ENCODE measurements at regions of chr15 and their contacts with region 1.

Region 1: GRCh38 chr15:101127506-101128076 is 124.3 kb downstream of the CHSY1 start:
- DNase-seq: peak in 6 of 9 donors; percentile 17 to 43 (median 24)
- ATAC-seq: peak; percentile 56
- H3K4me3 ChIP-seq: peak overlapping the region; percentile 5
- H3K4me3 Mint-ChIP-seq: peak overlapping the region; percentile 8 to 84 (median 66)
- H3K27ac ChIP-seq: peak overlapping the region; percentile 43
- H3K27ac Mint-ChIP-seq: peak overlapping the region; percentile 77 to 98 (median 92)
- H3K4me1 ChIP-seq: peaks cover 24 to 25% of the 10 kb centered on the region in 2 donors
- H3K4me1 Mint-ChIP-seq: peaks cover 30 to 68% (median 38%) of the 10 kb centered on the region in 7 donors
- H3K27me3 ChIP-seq: no peaks in the 10 kb centered on the region
- H3K27me3 Mint-ChIP-seq: peaks cover 0 to 6% (median 0%) of the 10 kb centered on the region in 5 donors

Region 2: DNA sequence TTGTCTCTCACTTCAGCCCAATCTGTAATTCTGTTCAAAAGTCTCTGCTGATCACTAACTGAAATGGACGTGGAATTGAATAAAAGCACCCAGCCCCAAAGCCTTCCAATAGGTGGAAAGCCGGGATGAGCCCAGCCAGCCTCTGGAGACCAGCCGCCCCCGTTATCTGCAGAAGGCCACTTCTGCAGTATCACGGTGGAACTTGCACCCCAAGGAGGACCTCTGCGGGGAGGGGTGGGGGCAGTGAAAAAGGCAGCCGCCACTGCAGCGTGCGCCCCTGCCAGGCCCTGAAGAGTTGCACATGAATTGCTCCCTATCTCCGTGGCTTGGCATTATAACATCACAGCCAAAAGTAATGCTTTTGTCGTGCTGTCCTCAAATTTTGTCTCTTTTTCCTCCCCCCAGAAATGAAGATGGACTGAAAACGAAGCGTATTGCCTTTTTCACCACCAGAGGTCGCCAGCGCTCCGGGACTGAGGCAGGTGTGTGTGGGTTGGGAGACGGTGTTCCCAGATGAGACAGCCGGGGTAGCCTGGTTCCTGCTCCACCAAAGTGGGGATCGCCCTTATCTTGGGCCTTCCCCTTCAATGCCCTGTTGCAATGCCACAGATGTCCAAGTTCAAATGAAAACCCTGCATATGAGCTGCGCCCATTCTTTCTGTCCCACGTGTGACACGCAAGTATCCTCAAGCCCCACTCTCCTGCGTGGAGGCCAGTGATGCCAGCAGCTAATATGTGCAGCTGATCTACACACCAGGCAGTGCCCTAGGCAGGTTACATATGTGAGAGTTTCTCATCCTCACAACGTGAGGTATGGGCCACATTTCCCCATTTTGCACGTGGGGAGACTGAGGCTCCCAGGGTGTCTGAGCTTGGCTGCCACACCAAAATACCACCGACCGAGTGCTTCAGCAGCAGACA is 112.4 kb before region 1 on chr15:
- CTCF ChIA-PET with region 1: no interaction called
- POLR2A ChIA-PET with region 1: no interaction called
- intact Hi-C with region 1: no loop called
- DNase-seq: peak; percentile 19 to 77 (median 48)
- ATAC-seq: peak; percentile 53
- H3K4me3 ChIP-seq: no peak overlapping the region
- H3K4me3 Mint-ChIP-seq: no peak overlapping the region
- H3K27ac ChIP-seq: no peak overlapping the region
- H3K27ac Mint-ChIP-seq: no peak overlapping the region
- H3K4me1 ChIP-seq: no peaks in the 10 kb centered on the region
- H3K4me1 Mint-ChIP-seq: peaks cover 0 to 3% (median 0%) of the 10 kb centered on the region in 7 donors
- H3K27me3 ChIP-seq: no peaks in the 10 kb centered on the region
- H3K27me3 Mint-ChIP-seq: peaks cover 0 to 3% (median 0%) of the 10 kb centered on the region in 5 donors

Region 3: DNA sequence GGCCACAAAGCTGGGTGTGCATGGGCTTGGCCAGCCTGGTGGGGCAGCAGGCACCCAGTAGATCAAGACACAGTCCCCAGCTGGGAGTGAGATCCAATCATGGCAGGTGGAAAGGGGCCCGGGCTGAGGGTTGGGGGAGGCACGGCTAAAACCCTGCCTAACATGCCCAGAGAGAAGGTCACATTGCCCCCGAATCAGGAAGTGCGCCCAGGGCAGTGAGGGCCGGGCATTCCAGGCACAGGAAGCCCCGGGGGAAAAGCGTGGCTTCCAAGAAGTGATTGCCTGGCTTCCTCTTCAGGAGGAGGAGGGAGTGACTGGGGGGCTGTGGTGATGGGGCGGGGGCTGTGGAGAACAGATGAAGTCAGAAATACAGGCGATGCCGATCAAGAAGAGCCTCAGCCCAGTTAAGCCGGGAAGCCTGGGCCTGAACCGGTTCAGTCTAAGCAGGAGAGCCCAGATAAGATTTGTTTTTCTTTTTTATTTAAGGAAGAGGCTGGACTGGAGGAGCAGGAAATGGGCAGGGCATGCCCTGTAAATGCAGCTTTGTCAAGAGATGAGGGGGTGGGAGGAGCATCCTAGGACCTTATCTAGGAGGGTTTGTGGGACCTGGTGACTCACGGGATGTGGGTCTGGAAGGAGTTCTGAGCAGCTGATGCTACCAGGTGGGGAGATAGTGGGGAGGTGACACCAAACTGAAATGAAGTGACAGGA is 40.3 kb after region 1 on chr15:
- CTCF ChIA-PET with region 1: no interaction called
- POLR2A ChIA-PET with region 1: no interaction called
- intact Hi-C with region 1: loop called in 1 of 2 experiments (anchors 5 kb)
- DNase-seq: peak in 4 of 9 donors; percentile 4 to 70 (median 12)
- ATAC-seq: peak; percentile 81
- H3K4me3 ChIP-seq: no peak overlapping the region
- H3K4me3 Mint-ChIP-seq: peak overlapping the region; percentile 34 to 78 (median 53)
- H3K27ac ChIP-seq: no peak overlapping the region
- H3K27ac Mint-ChIP-seq: peak overlapping the region in 8 of 9 donors; percentile 5 to 96 (median 49)
- H3K4me1 ChIP-seq: peaks cover 0 to 14% of the 10 kb centered on the region in 2 donors
- H3K4me1 Mint-ChIP-seq: peaks cover 12 to 50% (median 20%) of the 10 kb centered on the region in 7 donors
- H3K27me3 ChIP-seq: no peaks in the 10 kb centered on the region
- H3K27me3 Mint-ChIP-seq: no peaks in the 10 kb centered on the region

Region 4: DNA sequence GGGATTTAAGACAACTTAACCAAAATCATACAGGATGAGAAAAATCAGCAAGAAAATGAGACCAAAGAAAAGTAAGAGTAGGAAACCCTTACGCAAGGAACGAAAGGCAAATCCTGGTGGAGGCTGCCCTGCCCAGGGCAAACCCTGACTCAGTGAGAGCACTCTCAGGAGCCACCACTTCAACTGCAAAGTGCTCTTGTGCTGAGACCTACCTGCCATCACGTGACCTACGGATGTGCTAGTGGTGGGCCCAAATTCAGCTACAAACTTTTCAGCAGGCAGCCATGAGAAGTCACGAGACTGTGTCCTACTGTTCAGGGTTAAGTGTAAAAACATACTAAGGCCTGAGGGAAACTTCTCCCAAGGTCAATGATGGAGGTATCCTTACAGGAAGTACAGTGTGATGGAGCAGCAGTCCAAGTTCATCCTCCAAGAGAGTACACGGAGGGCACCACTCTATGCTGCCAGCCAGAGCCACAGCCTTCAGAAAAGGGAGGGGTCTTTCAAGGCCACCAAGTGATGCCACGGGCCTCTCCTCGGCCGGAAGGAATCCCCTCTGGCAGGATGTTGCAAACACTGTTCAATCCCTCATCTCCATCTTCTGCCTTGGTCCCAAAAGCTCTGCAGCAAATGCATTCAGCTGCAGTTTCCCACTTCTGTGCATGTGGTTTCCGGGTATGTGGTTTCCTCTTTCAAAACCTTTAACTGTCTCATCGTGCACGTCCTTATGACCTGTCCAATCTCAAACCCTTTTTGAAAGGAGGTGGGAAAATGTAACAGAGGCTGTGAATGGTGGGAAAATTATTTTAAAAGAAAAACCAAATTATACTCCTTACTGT is 114.8 kb after region 1 on chr15:
- CTCF ChIA-PET with region 1: no interaction called
- POLR2A ChIA-PET with region 1: no interaction called
- intact Hi-C with region 1: loop called in 1 of 2 experiments (anchors 2 kb)
- DNase-seq: peak in 8 of 9 donors; percentile 54 to 79 (median 74)
- ATAC-seq: peak; percentile 93
- H3K4me3 ChIP-seq: peak overlapping the region; percentile 40
- H3K4me3 Mint-ChIP-seq: peak overlapping the region; percentile 60 to 83 (median 71)
- H3K27ac ChIP-seq: no peak overlapping the region
- H3K27ac Mint-ChIP-seq: peak overlapping the region in 8 of 9 donors; percentile 53 to 89 (median 74)
- H3K4me1 ChIP-seq: peaks cover 63 to 80% of the 10 kb centered on the region in 2 donors
- H3K4me1 Mint-ChIP-seq: peaks cover 56 to 88% (median 85%) of the 10 kb centered on the region in 7 donors
- H3K27me3 ChIP-seq: no peaks in the 10 kb centered on the region
- H3K27me3 Mint-ChIP-seq: no peaks in the 10 kb centered on the region

Measured in naive thymus-derived CD4-positive, alpha-beta T cell (primary cell).